Activated CD4-positive, alpha-beta memory T cell treated with anti-CD3 and anti-CD28 coated beads, Interleukin-2, amount 10 ng/mL, durations not matched to agents 7 days and 5 days (primary cell): ENCODE measurements at regions of chr4 and their contacts with region 1.

Region 1: DNA sequence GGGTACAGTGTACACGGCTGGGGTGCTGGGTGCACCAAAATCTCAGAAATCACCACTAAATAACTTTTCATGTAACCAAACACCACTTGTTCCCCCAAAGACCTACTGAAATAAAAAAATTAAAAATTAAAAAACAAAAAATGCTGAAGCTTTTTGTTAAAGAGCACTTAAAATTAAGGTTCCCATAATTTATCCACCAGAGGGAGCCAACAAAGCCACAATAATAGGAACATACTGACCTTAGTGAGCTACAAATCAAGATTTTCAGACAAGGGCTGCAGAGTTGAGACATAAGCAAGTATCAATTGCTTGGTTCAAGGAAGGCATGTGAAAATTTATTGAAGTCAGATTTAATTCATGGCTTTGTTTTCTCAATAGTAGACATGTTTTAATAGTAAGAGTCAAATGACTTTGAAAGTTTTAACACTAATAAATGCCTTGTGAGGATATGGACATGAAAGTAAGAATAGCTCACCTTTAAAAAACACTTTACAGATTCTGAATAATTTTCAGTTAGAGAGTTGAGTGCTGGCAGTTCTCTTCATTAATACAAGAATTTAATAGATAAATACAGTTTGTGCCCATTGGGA is 43.0 kb upstream of the SCOC start:
- DNase-seq: no peak
- H3K4me3 Mint-ChIP-seq: no peak overlapping the region
- H3K27ac Mint-ChIP-seq: no peak overlapping the region
- H3K4me1 Mint-ChIP-seq: peaks cover 5% of the 10 kb centered on the region
- H3K27me3 Mint-ChIP-seq: peaks cover 26% of the 10 kb centered on the region

Region 2: DNA sequence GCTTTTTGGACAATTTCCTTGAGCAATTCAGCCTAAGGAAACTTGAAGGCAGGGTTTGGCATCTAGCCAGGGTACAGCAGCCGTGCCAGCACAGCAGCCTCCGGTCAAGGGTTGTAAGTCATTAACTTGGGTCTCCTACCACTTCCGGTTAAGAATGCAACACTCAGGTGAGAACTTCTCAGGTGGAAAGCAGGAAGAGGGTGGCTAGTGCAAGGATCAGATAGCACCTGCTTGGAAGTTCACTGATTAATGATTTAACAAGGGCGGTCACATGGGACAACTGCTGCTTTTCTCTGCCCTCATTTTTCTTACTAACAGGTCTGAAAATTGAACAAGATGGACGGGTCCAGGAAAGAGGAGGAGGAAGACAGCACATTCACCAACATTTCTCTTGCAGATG is 12.9 kb after region 1 on chr4:
- CTCF ChIA-PET with region 1: interaction called, 10 read pairs
- POLR2A ChIA-PET with region 1: no interaction called
- DNase-seq: no peak
- H3K4me3 Mint-ChIP-seq: no peak overlapping the region
- H3K27ac Mint-ChIP-seq: no peak overlapping the region
- H3K4me1 Mint-ChIP-seq: no peaks in the 10 kb centered on the region
- H3K27me3 Mint-ChIP-seq: peaks cover 27% of the 10 kb centered on the region